Endothelial cell of umbilical vein (primary cell): ENCODE measurements at regions of chr12 and their contacts with region 1.

Region 1: GRCh38 chr12:55738123-55739024 is 4.5 kb upstream of the GDF11 start:
- DNase-seq: peak; percentile 90
- H3K4me3 ChIP-seq: peak overlapping the region; percentile 57 to 91 (median 83)
- H3K27ac ChIP-seq: no peak overlapping the region
- H3K4me1 ChIP-seq: peaks cover 14% of the 10 kb centered on the region
- H3K27me3 ChIP-seq: no peaks in the 10 kb centered on the region
- CTCF ChIP-seq: peak; percentile 54 to 79
- POLR2A ChIP-seq: no peak

Region 2: DNA sequence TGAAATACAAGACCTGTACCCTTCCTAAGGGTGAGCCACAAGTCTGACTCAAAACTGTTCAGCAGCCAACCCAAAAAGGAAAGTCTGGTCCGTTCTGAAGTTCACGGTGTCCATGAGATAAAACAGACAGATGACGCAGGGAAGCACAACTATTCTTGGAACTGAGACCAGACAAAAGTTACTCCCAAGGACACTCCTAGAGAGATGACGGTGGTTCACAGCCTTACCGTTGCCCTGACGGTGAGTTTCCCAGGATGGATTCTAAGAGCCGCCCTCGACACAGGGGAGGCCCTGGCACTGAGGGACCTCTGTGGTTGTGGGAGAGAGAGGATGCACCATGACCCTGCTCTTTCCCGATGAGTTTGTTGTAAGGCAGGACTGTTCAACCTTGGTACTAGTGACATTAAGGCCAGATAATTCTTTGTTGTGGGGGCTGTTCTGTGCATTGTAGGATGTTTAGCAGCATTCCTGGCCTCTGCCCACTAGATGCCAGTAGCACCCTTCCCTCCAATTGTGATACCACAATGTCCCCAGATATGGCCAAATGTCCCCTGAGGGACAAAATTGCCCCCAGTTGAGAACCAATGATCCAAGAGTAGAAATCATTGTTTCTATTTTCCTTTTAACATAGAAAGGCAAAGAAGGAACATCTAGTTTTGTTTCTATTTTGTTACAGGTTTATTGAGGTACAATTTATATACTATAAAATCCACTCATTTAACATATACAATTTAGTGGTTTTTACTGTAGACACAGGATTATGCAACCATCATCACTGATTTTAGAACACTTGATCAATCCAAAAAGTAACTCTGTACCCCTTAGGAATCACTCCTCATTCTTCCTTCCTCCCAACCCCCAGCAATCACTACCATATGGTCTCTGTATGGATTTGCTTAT is 78.6 kb before region 1 on chr12:
- CTCF ChIA-PET with region 1: interaction called, 50 read pairs
- POLR2A ChIA-PET with region 1: no interaction called
- dilution Hi-C with region 1: no loop called
- intact Hi-C with region 1: loop called (anchors 1 kb)
- DNase-seq: peak; percentile 12
- H3K4me3 ChIP-seq: no peak overlapping the region
- H3K27ac ChIP-seq: no peak overlapping the region
- H3K4me1 ChIP-seq: no peaks in the 10 kb centered on the region
- H3K27me3 ChIP-seq: peaks cover 11 to 18% of the 10 kb centered on the region in 2 experiments
- CTCF ChIP-seq: peak; percentile 31 to 54
- POLR2A ChIP-seq: no peak

Region 3: DNA sequence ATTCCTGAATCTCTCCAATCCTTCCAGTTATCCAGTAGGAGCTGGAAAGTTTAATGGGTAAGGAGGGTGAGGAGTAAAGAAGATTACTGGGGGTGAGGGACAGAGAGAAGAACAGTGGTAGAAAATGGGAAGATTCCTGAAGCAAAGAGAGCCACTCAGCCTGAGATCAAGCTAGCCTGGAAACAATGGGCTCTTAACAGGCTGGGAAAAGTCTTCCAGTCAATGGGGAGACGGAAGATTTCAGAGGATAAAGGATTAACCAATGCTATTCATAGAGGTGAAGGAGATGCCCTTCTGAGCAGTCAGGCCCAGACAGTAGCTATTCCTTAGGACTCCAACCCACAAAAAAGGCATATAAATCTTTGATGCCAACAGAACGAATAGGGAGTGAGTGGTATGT is 19.3 kb after region 1 on chr12:
- CTCF ChIA-PET with region 1: interaction called, 11 read pairs
- POLR2A ChIA-PET with region 1: no interaction called
- dilution Hi-C with region 1: no loop called
- intact Hi-C with region 1: no loop called
- DNase-seq: no peak
- H3K4me3 ChIP-seq: no peak overlapping the region
- H3K27ac ChIP-seq: no peak overlapping the region
- H3K4me1 ChIP-seq: no peaks in the 10 kb centered on the region
- H3K27me3 ChIP-seq: no peaks in the 10 kb centered on the region
- CTCF ChIP-seq: no peak
- POLR2A ChIP-seq: no peak

Region 4: GRCh38 chr12:55817346-55818139 is 79.2 kb after region 1 on chr12 and contains the starts of genes ORMDL2 and SARNP:
- CTCF ChIA-PET with region 1: interaction called, 14 read pairs
- POLR2A ChIA-PET with region 1: no interaction called
- dilution Hi-C with region 1: no loop called
- intact Hi-C with region 1: loop called (anchors 5 kb)
- DNase-seq: peak; percentile 100
- H3K4me3 ChIP-seq: peak within 1 kb of the TSS; percentile 95 to 99 (median 98)
- H3K27ac ChIP-seq: peak within 1 kb of the TSS; percentile 81
- H3K4me1 ChIP-seq: peaks cover 16% of the 10 kb centered on the region
- H3K27me3 ChIP-seq: no peaks in the 10 kb centered on the region
- CTCF ChIP-seq: no peak
- POLR2A ChIP-seq: peak; percentile 78
- total RNA-seq, gene ORMDL2: 55.0 and 57.8 TPM in 2 replicates
- total RNA-seq, gene SARNP: 88.1 and 101 TPM in 2 replicates

Region 5: DNA sequence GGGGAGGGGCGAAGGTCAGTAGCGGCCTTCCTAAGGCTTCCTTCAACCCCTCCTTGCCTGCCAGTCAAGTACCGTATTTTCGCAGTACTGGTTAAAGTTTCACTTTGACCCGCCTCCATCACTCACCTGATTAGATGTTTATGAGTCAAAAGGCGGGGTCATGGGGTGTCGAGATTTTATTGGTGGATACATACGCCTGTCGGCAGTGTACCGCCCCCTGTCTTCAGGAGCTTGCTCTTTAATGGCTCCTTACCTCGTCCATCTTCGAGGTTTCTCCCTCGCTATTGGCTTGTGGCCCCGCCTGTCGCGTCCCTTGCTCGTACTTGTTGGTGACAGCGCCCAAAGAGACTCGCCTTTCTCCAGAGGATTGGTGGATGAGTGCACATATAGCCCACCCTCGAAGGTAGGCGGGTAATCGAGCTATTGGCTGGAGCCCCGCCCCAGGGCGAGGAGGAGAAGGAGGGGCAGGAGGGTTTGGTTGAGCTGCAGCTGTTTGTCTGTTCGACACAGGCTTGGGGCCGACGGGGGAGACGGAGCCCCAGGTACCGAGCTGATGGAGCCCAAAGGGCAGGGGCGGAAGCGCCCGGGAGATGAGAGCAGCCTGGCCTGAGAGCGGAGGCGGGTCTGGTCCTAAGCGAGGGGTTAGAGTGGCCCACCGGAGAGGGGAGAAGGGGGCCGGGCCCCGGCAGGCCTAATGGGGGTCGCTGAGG is 235.4 kb after region 1 on chr12 and contains the start of gene RAB5B:
- CTCF ChIA-PET with region 1: interaction called, 12 read pairs
- POLR2A ChIA-PET with region 1: no interaction called
- dilution Hi-C with region 1: no loop called
- intact Hi-C with region 1: no loop called
- DNase-seq: peak; percentile 100
- H3K4me3 ChIP-seq: peak within 1 kb of the TSS; percentile 87 to 93 (median 92)
- H3K27ac ChIP-seq: peak within 1 kb of the TSS; percentile 81
- H3K4me1 ChIP-seq: peaks cover 27% of the 10 kb centered on the region
- H3K27me3 ChIP-seq: no peaks in the 10 kb centered on the region
- CTCF ChIP-seq: no peak
- POLR2A ChIP-seq: peak; percentile 74
- total RNA-seq, gene RAB5B: 97.4 and 103 TPM in 2 replicates

Region 6: GRCh38 chr12:56041552-56042429 is 303.4 kb after region 1 on chr12 and contains the start of gene RPS26:
- CTCF ChIA-PET with region 1: interaction called, 13 read pairs
- POLR2A ChIA-PET with region 1: no interaction called
- dilution Hi-C with region 1: no loop called
- intact Hi-C with region 1: loop called (anchors 1 kb)
- DNase-seq: peak; percentile 100
- H3K4me3 ChIP-seq: peak within 1 kb of the TSS; percentile 84 to 100 (median 87)
- H3K27ac ChIP-seq: peak within 1 kb of the TSS; percentile 95
- H3K4me1 ChIP-seq: peaks cover 17% of the 10 kb centered on the region
- H3K27me3 ChIP-seq: no peaks in the 10 kb centered on the region
- CTCF ChIP-seq: peak in 1 of 2 donors; percentile 46
- POLR2A ChIP-seq: peak; percentile 99
- total RNA-seq, gene RPS26: 57.3 and 66.7 TPM in 2 replicates

Region 7: DNA sequence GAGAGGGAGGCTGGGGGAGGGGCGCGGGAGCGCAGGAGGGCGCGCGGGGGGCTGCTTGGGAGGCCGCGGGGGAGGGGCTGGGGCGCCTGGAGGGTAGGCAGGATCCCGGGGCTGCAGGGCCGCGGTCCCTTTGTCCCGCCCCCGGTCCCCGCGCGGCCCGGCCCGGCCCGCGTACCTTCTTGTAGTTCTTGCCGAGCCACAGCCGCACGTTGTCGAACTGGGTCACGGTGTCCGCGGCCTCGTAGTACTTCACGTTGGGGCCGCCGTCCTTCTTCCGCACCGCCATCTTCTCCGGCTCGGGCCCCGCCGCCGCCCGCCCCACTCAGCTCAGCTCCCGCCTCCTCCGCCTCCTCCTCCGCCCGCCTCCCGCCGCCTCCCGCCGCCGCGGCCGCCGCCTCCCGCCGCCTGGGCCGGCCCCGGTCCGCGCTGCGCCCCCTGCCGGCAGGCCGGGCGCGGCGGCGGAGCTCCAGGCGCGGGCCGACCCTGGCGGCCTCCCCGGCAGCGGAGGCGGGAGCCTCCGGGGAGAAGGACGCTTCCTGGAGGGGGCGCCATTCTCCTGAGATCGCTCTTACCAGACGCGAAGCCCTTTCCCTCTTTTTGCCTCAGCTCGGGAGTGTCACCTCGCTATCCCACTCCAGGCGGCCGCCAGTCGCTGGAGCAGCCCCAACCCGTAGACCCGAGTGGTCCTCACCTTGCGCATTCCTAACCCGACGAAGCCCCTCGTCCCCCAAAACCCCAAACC is 451.0 kb after region 1 on chr12 and contains the start of gene SMARCC2:
- CTCF ChIA-PET with region 1: interaction called, 26 read pairs
- POLR2A ChIA-PET with region 1: no interaction called
- dilution Hi-C with region 1: no loop called
- intact Hi-C with region 1: loop called (anchors 2 kb)
- DNase-seq: peak; percentile 88
- H3K4me3 ChIP-seq: peak within 1 kb of the TSS; percentile 70 to 95 (median 89)
- H3K27ac ChIP-seq: peak within 1 kb of the TSS; percentile 24
- H3K4me1 ChIP-seq: peaks cover 20% of the 10 kb centered on the region
- H3K27me3 ChIP-seq: no peaks in the 10 kb centered on the region
- CTCF ChIP-seq: peak; percentile 75 to 82
- POLR2A ChIP-seq: peak; percentile 41
- total RNA-seq, gene SMARCC2: 117 and 121 TPM in 2 replicates